Dorsolateral prefrontal cortex (tissue), 120 donors: ENCODE measurements at regions of chr2 and their contacts with region 1.

Region 1: GRCh38 chr2:47061944-47062678 is 93.0 kb downstream of the STPG4 start:
- DNase-seq: no peak
- H3K4me3 ChIP-seq: peak overlapping the region in 1 of 59 donors; percentile 1
- H3K27ac ChIP-seq: peak overlapping the region; percentile 48 to 97 (median 88)
- H3K27me3 ChIP-seq: no peaks in the 10 kb centered on the region
- CTCF ChIP-seq: no peak

Region 2: DNA sequence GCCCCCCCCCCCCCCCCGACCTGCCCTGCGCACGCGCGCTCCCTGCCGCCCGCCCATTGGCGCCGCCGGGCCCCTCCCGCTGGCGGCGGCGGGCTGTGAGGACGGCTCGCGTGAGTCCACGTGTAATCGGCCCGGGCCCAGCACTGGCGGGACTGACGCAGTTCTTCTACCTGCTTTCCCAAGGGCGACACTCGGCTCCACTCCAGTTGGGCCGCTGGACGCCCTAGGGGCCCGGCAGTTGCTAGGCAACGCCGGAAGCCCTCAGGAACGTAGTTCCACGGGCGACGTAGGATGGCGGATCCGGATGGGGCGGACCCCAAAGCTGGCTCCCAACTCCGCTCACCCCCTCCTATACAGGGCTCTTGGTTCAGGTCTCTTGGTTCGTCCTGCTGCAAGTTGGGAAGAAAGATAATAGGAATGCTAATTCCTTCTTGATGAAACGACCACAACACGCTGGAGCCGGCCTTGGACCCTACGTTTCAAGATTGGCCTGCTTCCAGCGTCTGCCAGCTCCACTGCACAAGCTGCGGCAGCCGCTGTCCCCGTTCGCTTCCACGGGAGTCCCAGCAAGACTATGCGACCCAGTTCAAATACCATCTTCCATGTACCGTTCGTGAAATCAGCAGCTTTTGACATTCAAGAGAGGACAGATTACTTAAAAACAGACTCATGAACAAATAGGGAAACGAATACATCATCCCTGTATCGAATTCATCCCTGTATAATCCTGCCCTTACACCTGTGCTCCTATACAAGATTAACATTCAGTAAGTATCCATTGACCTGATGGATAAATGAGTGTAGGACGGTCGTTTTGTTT is 146.1 kb before region 1 on chr2:
- intact Hi-C with region 1: no loop called
- DNase-seq: peak; percentile 78 to 93 (median 86)
- H3K4me3 ChIP-seq: peak overlapping the region; percentile 63 to 100 (median 99)
- H3K27ac ChIP-seq: peak overlapping the region; percentile 66 to 98 (median 91)
- H3K27me3 ChIP-seq: no peaks in the 10 kb centered on the region
- CTCF ChIP-seq: peak in 7 of 56 donors; percentile 4 to 31 (median 10)

Region 3: DNA sequence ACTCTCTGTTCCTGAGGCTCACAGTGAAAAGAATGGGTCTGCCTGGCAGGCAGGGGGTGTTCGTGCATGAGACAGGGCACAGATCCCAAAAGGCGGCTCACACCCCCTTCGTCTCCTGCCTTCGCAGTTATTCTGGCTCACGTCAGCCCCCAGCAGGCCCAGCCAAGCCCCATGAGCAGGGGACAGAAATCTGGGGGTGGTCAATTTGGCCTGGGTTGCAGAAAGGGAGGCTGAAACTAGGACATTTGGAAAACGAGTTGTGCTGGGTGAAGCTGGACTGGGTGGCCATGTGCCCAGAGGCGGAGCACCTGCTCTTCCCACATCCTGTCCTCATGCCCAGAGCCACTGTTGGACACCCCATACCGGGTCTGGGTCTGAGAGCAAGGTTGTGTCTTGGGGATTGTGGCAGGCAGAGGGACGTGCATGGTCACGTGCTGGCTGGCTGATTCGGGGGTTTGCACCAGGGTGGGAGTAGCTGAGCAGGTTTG is 47.5 kb before region 1 on chr2:
- intact Hi-C with region 1: loop called (anchors 5 kb)
- DNase-seq: peak in 9 of 10 donors; percentile 52 to 86 (median 78)
- H3K4me3 ChIP-seq: no peak overlapping the region
- H3K27ac ChIP-seq: peak overlapping the region; percentile 22 to 99 (median 85)
- H3K27me3 ChIP-seq: no peaks in the 10 kb centered on the region
- CTCF ChIP-seq: peak in 5 of 56 donors; percentile 7 to 22 (median 10)